Activated B cell treated with CpG ODN at 0.5 μM for 24 hours (primary cell): ENCODE measurements at regions of chr7 and their contacts with region 1.

Region 1: DNA sequence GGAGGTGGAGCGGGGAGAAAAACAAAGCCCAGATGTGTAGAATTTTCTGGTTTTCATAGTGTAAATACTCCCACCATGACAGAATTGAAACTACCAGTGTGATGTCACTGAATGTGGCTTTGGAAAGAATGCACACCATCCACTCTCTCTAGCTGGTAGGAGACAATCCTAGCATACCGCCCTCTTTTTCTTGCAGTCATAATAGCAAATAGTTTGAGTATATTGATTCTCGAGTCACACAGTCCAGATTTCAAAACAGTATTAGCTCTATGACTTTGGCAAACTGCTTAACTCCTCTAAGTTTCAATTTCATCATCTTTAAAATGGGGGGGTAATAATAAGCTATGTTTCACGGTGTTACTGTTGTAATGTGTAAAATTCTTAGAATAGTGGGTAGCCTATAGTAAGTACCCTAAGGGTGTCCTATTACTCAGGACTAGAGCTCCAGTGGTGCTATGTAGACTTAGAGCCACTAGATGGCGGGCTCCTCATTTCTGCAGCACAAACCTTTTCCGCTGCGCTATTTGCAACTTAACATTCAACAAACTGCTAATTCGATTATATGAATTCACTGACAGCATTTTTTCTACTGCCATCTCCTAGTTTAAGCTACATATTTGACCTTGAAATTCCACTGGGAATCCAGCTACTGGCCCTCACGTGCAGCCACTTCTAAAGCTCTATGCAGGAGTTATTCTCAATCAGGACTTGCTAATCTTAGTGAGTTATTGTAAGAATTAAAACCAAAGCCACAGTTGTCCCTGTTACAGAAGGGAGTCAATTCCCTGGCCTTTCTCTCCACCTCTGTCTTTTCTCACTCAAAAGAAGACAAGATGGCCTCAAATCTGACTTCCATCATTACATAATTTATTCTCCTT is 18.7 kb downstream of the TAS2R40 start:
- DNase-seq: no peak
- ATAC-seq: peak; percentile 98
- H3K4me3 Mint-ChIP-seq: no peak overlapping the region
- H3K27ac Mint-ChIP-seq: no peak overlapping the region
- H3K4me1 Mint-ChIP-seq: peaks cover 4% of the 10 kb centered on the region
- H3K27me3 Mint-ChIP-seq: peaks cover 14% of the 10 kb centered on the region
- CTCF ChIP-seq: peak; percentile 51

Region 2: DNA sequence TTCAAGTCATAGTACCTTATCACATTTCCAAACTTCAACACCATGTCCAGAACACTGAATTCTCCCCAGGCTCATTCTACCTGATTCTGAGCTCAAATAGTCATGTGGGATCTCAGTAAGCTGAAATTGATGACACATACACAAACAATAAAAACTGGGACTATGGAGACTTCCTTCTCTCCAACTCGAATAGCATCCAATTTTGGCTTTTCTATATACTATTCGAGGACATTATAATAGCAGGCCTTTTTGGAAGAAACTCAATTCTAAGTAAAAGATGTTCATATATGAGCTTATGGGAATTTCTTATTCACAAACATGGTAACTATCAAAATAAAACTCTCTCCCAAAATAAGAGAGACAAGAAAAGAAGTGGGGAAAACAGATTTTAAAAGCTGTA is 19.2 kb before region 1 on chr7:
- CTCF ChIA-PET with region 1: interaction called, 11 read pairs
- POLR2A ChIA-PET with region 1: no interaction called
- intact Hi-C with region 1: no loop called
- DNase-seq: no peak
- ATAC-seq: no peak
- H3K4me3 Mint-ChIP-seq: no peak overlapping the region
- H3K27ac Mint-ChIP-seq: no peak overlapping the region
- H3K4me1 Mint-ChIP-seq: no peaks in the 10 kb centered on the region
- H3K27me3 Mint-ChIP-seq: peaks cover 16% of the 10 kb centered on the region
- CTCF ChIP-seq: no peak

Region 3: GRCh38 chr7:143263266-143264195 is 23.0 kb after region 1 on chr7 and contains the start of gene GSTK1:
- CTCF ChIA-PET with region 1: interaction called, 24 read pairs
- POLR2A ChIA-PET with region 1: interaction called, 10 read pairs
- intact Hi-C with region 1: no loop called
- DNase-seq: peak; percentile 68
- ATAC-seq: peak; percentile 97
- H3K4me3 Mint-ChIP-seq: peak within 1 kb of the TSS; percentile 95
- H3K27ac Mint-ChIP-seq: peak within 1 kb of the TSS; percentile 83
- H3K4me1 Mint-ChIP-seq: peaks cover 52% of the 10 kb centered on the region
- H3K27me3 Mint-ChIP-seq: no peaks in the 10 kb centered on the region
- CTCF ChIP-seq: no peak
- total RNA-seq, gene GSTK1: 144 and 150 TPM in 2 replicates

Region 4: DNA sequence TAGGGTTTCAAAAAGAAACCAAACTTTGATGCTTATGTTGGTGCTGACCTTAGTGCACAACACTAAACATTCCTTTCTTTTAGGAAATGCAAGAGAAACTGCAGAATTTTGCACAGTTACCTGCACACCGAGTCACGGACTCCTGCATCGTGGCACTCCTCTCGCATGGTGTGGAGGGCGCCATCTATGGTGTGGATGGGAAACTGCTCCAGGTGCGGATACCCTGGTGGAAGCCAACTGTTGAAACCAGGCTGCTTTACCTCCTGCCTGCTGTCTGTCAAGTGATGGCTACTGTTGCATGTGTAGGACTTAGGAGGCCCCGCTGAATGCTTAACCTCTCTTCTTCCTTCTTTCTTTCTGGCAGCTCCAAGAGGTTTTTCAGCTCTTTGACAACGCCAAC is 59.3 kb after region 1 on chr7:
- CTCF ChIA-PET with region 1: interaction called, 51 read pairs
- POLR2A ChIA-PET with region 1: no interaction called
- intact Hi-C with region 1: loop called (anchors 1 kb)
- DNase-seq: no peak
- ATAC-seq: peak; percentile 66
- H3K4me3 Mint-ChIP-seq: no peak overlapping the region
- H3K27ac Mint-ChIP-seq: no peak overlapping the region
- H3K4me1 Mint-ChIP-seq: peaks cover 32% of the 10 kb centered on the region
- H3K27me3 Mint-ChIP-seq: no peaks in the 10 kb centered on the region
- CTCF ChIP-seq: no peak

Region 5: GRCh38 chr7:143362131-143363015 is 121.8 kb after region 1 on chr7 and contains the start of gene FAM131B:
- CTCF ChIA-PET with region 1: interaction called, 3 read pairs
- POLR2A ChIA-PET with region 1: no interaction called
- intact Hi-C with region 1: loop called (anchors 1 kb)
- DNase-seq: no peak
- ATAC-seq: peak; percentile 53
- H3K4me3 Mint-ChIP-seq: peak within 1 kb of the TSS; percentile 82
- H3K27ac Mint-ChIP-seq: peak within 1 kb of the TSS; percentile 6
- H3K4me1 Mint-ChIP-seq: peaks cover 11% of the 10 kb centered on the region
- H3K27me3 Mint-ChIP-seq: peaks cover 51% of the 10 kb centered on the region
- CTCF ChIP-seq: no peak
- total RNA-seq, gene FAM131B: not detected in 2 replicates

Region 6: GRCh38 chr7:143416565-143417149 is 176.1 kb after region 1 on chr7:
- CTCF ChIA-PET with region 1: interaction called, 118 read pairs
- POLR2A ChIA-PET with region 1: no interaction called
- intact Hi-C with region 1: loop called (anchors 1 kb)
- DNase-seq: no peak
- ATAC-seq: no peak
- H3K4me3 Mint-ChIP-seq: no peak overlapping the region
- H3K27ac Mint-ChIP-seq: no peak overlapping the region
- H3K4me1 Mint-ChIP-seq: no peaks in the 10 kb centered on the region
- H3K27me3 Mint-ChIP-seq: peaks cover 37% of the 10 kb centered on the region
- CTCF ChIP-seq: peak; percentile 58

Region 7: DNA sequence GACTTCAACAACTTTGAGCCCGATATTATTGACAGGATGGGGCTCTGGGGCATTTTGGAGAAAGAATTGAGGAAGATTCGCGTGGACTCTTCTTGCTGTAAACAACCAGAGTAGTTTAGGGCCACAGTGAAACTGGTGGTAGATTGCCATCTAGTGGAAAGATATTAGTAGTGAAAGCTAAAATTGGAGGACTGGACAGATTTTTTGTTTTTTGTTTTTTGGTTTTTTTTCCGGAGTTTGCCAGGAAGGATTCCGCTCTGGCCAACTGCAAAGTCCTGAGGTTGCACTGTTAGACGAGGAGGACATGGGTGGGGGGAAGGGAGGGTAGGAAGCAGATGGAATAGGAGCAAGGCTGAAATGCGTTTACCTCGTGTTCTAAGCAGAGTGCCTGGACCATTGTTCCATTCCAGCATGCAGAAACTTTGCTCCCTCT is 1151.3 kb after region 1 on chr7:
- CTCF ChIA-PET with region 1: no interaction called
- POLR2A ChIA-PET with region 1: no interaction called
- intact Hi-C with region 1: loop called (anchors 10 kb)
- DNase-seq: no peak
- ATAC-seq: peak; percentile 67
- H3K4me3 Mint-ChIP-seq: peak overlapping the region; percentile 30
- H3K27ac Mint-ChIP-seq: no peak overlapping the region
- H3K4me1 Mint-ChIP-seq: peaks cover 4% of the 10 kb centered on the region
- H3K27me3 Mint-ChIP-seq: no peaks in the 10 kb centered on the region
- CTCF ChIP-seq: peak; percentile 82